Activated CD4-positive, alpha-beta T cell treated with anti-CD3 and anti-CD28 coated beads, Interleukin-2, amount 10 ng/mL, durations not matched to agents 24 days and 14 days (primary cell): ENCODE measurements at regions of chr2 and their contacts with region 1.

Region 1: GRCh38 chr2:96470636-96471035 is 34.5 kb downstream of the NEURL3 start:
- DNase-seq: peak; percentile 87
- H3K4me3 Mint-ChIP-seq: no peak overlapping the region
- H3K27ac Mint-ChIP-seq: no peak overlapping the region
- H3K4me1 Mint-ChIP-seq: peaks cover 6% of the 10 kb centered on the region
- H3K27me3 Mint-ChIP-seq: peaks cover 13% of the 10 kb centered on the region

Region 2: GRCh38 chr2:96305091-96305978 is 165.3 kb before region 1 on chr2 and contains the start of gene SNRNP200:
- intact Hi-C with region 1: no loop called
- DNase-seq: peak; percentile 97
- H3K4me3 Mint-ChIP-seq: peak within 1 kb of the TSS; percentile 100
- H3K27ac Mint-ChIP-seq: peak within 1 kb of the TSS; percentile 99
- H3K4me1 Mint-ChIP-seq: peaks cover 56% of the 10 kb centered on the region
- H3K27me3 Mint-ChIP-seq: no peaks in the 10 kb centered on the region
- total RNA-seq, gene SNRNP200: 197 and 203 TPM in 2 replicates

Region 3: GRCh38 chr2:96407041-96407918 is 63.4 kb before region 1 on chr2:
- intact Hi-C with region 1: loop called (anchors 5 kb)
- DNase-seq: peak; percentile 90
- H3K4me3 Mint-ChIP-seq: peak overlapping the region; percentile 41
- H3K27ac Mint-ChIP-seq: peak overlapping the region; percentile 80
- H3K4me1 Mint-ChIP-seq: peaks cover 13% of the 10 kb centered on the region
- H3K27me3 Mint-ChIP-seq: no peaks in the 10 kb centered on the region